Activated CD8-positive, alpha-beta T cell treated with anti-CD3 and anti-CD28 coated beads for 36 hours (primary cell): ENCODE measurements at regions of chr7 and their contacts with region 1.

Region 1: GRCh38 chr7:138981332-138982203 is at the start of gene KIAA1549:
- DNase-seq: peak; percentile 57
- ATAC-seq: peak; percentile 90
- H3K4me3 Mint-ChIP-seq: peak within 1 kb of the TSS; percentile 78
- H3K27ac Mint-ChIP-seq: peak within 1 kb of the TSS; percentile 52
- H3K4me1 Mint-ChIP-seq: peaks cover 16% of the 10 kb centered on the region
- H3K27me3 Mint-ChIP-seq: peaks cover 32% of the 10 kb centered on the region
- CTCF ChIP-seq: no peak
- total RNA-seq, gene KIAA1549: 1.3 to 1.5 TPM

Region 2: DNA sequence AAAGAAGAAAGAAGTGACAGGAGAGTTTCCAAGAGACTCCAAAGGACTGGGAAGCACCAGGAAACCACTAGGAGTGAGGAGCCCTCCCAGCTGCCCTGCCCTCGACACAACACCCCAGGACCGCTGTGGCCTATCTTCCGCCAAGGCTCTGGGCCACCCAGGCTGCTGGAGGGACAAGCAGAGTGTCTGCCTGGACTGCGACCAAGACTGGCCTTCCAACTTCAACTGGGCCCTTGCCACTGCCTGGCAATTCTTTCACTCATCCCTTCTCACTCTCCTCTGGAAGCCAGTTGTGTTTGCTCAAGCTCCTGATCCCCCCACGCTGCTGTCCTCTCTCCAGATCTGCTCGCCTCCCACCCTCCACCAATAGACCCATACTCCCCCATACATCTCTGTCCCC is 10.6 kb before region 1 on chr7:
- CTCF ChIA-PET with region 1: interaction called, 10 read pairs
- POLR2A ChIA-PET with region 1: no interaction called
- intact Hi-C with region 1: no loop called
- DNase-seq: no peak
- ATAC-seq: no peak
- H3K4me3 Mint-ChIP-seq: no peak overlapping the region
- H3K27ac Mint-ChIP-seq: no peak overlapping the region
- H3K4me1 Mint-ChIP-seq: no peaks in the 10 kb centered on the region
- H3K27me3 Mint-ChIP-seq: peaks cover 6% of the 10 kb centered on the region
- CTCF ChIP-seq: no peak

Region 3: DNA sequence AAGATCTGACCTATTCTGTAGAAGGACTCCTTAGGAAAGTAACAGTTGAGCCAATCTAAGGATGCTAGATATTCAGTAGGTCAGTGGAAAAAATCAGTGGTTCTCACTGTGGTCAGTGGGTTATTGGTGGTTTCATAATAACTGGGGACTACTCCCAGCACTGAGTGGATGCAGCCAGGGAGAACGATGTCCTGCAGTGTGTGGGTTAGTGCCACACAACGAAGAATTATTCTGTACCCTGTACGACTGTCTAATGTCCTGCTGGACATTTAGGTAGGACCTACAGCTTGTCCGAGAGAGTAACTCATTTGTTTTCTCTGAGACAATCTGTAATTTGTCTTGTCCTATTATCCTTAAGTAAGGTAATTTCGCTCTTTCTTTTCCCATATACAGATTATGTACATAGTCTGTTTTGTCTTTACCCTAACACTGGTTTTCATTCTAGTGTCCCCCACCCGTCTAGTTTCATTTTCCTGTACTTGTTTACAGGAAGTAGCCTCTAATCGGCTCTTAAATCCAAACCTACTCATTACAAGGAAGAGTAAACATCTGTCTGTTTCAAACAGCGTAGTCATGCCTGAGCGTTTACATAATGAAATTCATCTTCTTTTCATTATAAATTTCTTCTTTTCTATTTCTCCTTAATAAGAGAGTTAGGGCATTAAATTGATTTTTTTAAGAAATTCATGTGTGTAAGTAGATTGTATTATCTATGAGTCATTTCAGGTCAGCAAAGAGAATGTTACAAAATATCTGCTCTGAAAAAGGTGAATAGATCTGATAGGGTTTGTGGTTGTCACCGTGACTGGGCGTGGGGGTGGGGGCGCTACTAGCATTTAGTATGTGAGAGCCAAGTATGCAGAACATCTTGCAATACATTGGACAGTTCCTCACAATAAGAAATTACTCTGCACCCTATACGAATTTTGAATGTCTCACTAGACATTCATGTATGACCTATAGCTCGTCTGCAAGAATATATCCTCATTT is 62.5 kb after region 1 on chr7:
- CTCF ChIA-PET with region 1: no interaction called
- POLR2A ChIA-PET with region 1: no interaction called
- intact Hi-C with region 1: no loop called
- DNase-seq: peak; percentile 91
- ATAC-seq: peak; percentile 55
- H3K4me3 Mint-ChIP-seq: no peak overlapping the region
- H3K27ac Mint-ChIP-seq: peak overlapping the region; percentile 89
- H3K4me1 Mint-ChIP-seq: peaks cover 59% of the 10 kb centered on the region
- H3K27me3 Mint-ChIP-seq: no peaks in the 10 kb centered on the region
- CTCF ChIP-seq: no peak

Region 4: GRCh38 chr7:139431010-139431409 is 449.4 kb after region 1 on chr7:
- CTCF ChIA-PET with region 1: no interaction called
- POLR2A ChIA-PET with region 1: no interaction called
- intact Hi-C with region 1: no loop called
- DNase-seq: no peak
- ATAC-seq: no peak
- H3K4me3 Mint-ChIP-seq: no peak overlapping the region
- H3K27ac Mint-ChIP-seq: no peak overlapping the region
- H3K4me1 Mint-ChIP-seq: peaks cover 5% of the 10 kb centered on the region
- H3K27me3 Mint-ChIP-seq: no peaks in the 10 kb centered on the region
- CTCF ChIP-seq: no peak